Psoas muscle (tissue), 8 donors: ENCODE measurements at regions of chr14 and their contacts with region 1.

Region 1: DNA sequence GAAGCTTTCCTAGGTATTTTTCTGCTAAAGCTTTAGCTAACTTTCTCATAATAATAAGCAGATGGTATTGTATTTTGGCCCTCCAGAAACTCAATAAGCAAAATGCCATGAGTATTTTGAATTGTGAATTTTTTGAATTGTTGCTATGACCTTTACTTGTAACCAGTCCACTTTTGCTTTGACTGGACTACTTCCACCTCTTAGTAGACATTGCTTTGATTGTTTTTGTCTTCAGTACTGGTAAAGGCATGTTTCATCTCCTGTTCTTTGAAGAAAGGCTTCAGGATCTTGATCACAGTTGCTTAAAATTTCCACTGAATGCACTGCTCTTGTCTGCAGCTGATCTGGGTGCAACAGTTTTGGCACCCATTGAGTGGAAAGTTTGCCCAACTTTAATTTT is 102.3 kb downstream of the TRMT5 start:
- DNase-seq: no peak
- ATAC-seq: no peak
- H3K4me3 ChIP-seq: no peak overlapping the region
- H3K27ac ChIP-seq: no peak overlapping the region
- H3K4me1 ChIP-seq: no peaks in the 10 kb centered on the region
- H3K27me3 ChIP-seq: no peaks in the 10 kb centered on the region
- CTCF ChIP-seq: no peak

Region 2: DNA sequence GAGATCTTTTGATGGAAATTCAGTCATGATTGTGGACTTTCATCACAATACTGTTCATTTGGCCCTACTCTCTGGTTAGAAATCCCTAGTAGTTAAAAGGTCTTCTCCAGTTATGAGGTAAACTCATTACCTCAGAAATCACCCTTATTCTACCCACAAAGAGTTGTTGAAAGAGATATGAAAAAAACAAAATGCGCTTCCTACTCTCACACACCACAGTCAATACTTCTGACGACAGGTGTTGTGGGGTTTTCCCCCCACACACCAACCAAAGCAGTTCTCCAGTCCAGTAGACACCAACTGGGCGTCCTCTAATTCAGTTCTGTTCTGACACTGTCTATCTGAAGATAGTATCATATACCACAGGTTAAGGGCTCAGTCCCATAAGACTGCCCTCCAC is 47.5 kb after region 1 on chr14:
- intact Hi-C with region 1: loop called in 1 of 2 experiments (anchors 10 kb)
- DNase-seq: no peak
- ATAC-seq: no peak
- H3K4me3 ChIP-seq: no peak overlapping the region
- H3K27ac ChIP-seq: no peak overlapping the region
- H3K4me1 ChIP-seq: peaks cover 17% of the 10 kb centered on the region
- H3K27me3 ChIP-seq: no peaks in the 10 kb centered on the region
- CTCF ChIP-seq: no peak